Cardiac septum (tissue), 1 donor: ENCODE measurements at regions of chr11 and their contacts with region 1.

Region 1: GRCh38 chr11:73141848-73142286 is 251 bp downstream of the FCHSD2 start:
- DNase-seq: peak; percentile 88

Region 2: GRCh38 chr11:72856551-72857345 is 285.1 kb before region 1 on chr11:
- intact Hi-C with region 1: loop called (anchors 5 kb)
- DNase-seq: no peak

Region 3: GRCh38 chr11:72924568-72925190 is 217.2 kb before region 1 on chr11:
- intact Hi-C with region 1: loop called (anchors 2 kb)
- DNase-seq: no peak